Naive thymus-derived CD8-positive, alpha-beta T cell (primary cell): ENCODE measurements at regions of chr2 and their contacts with region 1.

Region 1: GRCh38 chr2:197198890-197199289 is 111.7 kb downstream of the ANKRD44 start:
- DNase-seq: peak; percentile 63 to 98 (median 93)
- ATAC-seq: peak; percentile 79 to 89
- H3K4me3 Mint-ChIP-seq: peak overlapping the region; percentile 86 to 98 (median 94)
- H3K27ac Mint-ChIP-seq: peak overlapping the region; percentile 96 to 100 (median 98)
- H3K4me1 Mint-ChIP-seq: peaks cover 42 to 96% (median 92%) of the 10 kb centered on the region in 4 donors
- H3K27me3 Mint-ChIP-seq: peaks cover 0 to 2% (median 0%) of the 10 kb centered on the region in 5 donors

Region 2: GRCh38 chr2:197216361-197216979 is 17.6 kb after region 1 on chr2:
- POLR2A ChIA-PET with region 1: interaction called, 224 read pairs
- DNase-seq: no peak
- ATAC-seq: peak in 1 of 2 donors; percentile 38
- H3K4me3 Mint-ChIP-seq: peak overlapping the region; percentile 29 to 87 (median 72)
- H3K27ac Mint-ChIP-seq: peak overlapping the region; percentile 91 to 99 (median 97)
- H3K4me1 Mint-ChIP-seq: peaks cover 37 to 94% (median 88%) of the 10 kb centered on the region in 4 donors
- H3K27me3 Mint-ChIP-seq: no peaks in the 10 kb centered on the region

Region 3: GRCh38 chr2:197239434-197239833 is 40.5 kb after region 1 on chr2:
- POLR2A ChIA-PET with region 1: interaction called, 259 read pairs
- DNase-seq: peak in 1 of 10 donors; percentile 40
- ATAC-seq: peak in 1 of 2 donors; percentile 22
- H3K4me3 Mint-ChIP-seq: peak overlapping the region; percentile 73 to 90 (median 86)
- H3K27ac Mint-ChIP-seq: peak overlapping the region; percentile 77 to 100 (median 94)
- H3K4me1 Mint-ChIP-seq: peaks cover 49 to 96% (median 84%) of the 10 kb centered on the region in 4 donors
- H3K27me3 Mint-ChIP-seq: no peaks in the 10 kb centered on the region

Region 4: DNA sequence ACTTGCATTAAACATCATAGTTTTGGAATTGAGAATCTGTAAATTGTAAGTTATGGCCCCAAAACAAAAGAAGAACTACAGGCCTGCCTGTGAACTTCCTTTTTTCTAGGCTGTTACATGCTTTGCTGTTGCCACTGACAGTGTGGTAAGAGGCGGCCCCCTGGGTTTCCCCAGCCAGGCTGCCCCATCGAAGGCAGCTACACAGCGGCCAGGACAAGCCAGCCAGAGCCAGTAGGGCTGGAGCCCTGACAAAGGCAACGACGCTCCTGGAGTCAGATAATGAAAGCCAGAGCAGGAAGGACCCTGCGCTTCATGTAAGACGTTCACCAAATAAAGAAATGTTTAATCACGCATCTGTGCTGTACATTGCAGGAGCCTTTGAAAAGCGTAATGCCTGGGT is 56.7 kb after region 1 on chr2:
- POLR2A ChIA-PET with region 1: interaction called, 40 read pairs
- DNase-seq: peak; percentile 51 to 83 (median 68)
- ATAC-seq: peak; percentile 84 to 94
- H3K4me3 Mint-ChIP-seq: peak overlapping the region; percentile 70 to 86 (median 79)
- H3K27ac Mint-ChIP-seq: peak overlapping the region; percentile 90 to 100 (median 96)
- H3K4me1 Mint-ChIP-seq: peaks cover 37 to 85% (median 78%) of the 10 kb centered on the region in 4 donors
- H3K27me3 Mint-ChIP-seq: no peaks in the 10 kb centered on the region

Region 5: GRCh38 chr2:197279997-197280746 is 81.3 kb after region 1 on chr2:
- POLR2A ChIA-PET with region 1: interaction called, 10 read pairs
- DNase-seq: no peak
- ATAC-seq: peak; percentile 64 to 84
- H3K4me3 Mint-ChIP-seq: peak overlapping the region; percentile 57 to 85 (median 80)
- H3K27ac Mint-ChIP-seq: peak overlapping the region; percentile 90 to 96 (median 94)
- H3K4me1 Mint-ChIP-seq: peaks cover 51 to 91% (median 86%) of the 10 kb centered on the region in 4 donors
- H3K27me3 Mint-ChIP-seq: no peaks in the 10 kb centered on the region

Region 6: GRCh38 chr2:197391220-197391717 is 192.4 kb after region 1 on chr2:
- POLR2A ChIA-PET with region 1: no interaction called
- DNase-seq: no peak
- ATAC-seq: no peak
- H3K4me3 Mint-ChIP-seq: no peak overlapping the region
- H3K27ac Mint-ChIP-seq: peak overlapping the region in 1 of 10 donors; percentile 1
- H3K4me1 Mint-ChIP-seq: peaks cover 0 to 3% (median 0%) of the 10 kb centered on the region in 4 donors
- H3K27me3 Mint-ChIP-seq: no peaks in the 10 kb centered on the region